ACHN (cell line): ENCODE measurements at regions of chr4 and their contacts with region 1.

Region 1: GRCh38 chr4:88823058-88823919 is 125.7 kb upstream of the NAP1L5 start:
- DNase-seq: peak; percentile 82

Region 2: GRCh38 chr4:88446124-88446523 is 377.2 kb before region 1 on chr4:
- in situ Hi-C with region 1: no loop called
- DNase-seq: no peak

Region 3: DNA sequence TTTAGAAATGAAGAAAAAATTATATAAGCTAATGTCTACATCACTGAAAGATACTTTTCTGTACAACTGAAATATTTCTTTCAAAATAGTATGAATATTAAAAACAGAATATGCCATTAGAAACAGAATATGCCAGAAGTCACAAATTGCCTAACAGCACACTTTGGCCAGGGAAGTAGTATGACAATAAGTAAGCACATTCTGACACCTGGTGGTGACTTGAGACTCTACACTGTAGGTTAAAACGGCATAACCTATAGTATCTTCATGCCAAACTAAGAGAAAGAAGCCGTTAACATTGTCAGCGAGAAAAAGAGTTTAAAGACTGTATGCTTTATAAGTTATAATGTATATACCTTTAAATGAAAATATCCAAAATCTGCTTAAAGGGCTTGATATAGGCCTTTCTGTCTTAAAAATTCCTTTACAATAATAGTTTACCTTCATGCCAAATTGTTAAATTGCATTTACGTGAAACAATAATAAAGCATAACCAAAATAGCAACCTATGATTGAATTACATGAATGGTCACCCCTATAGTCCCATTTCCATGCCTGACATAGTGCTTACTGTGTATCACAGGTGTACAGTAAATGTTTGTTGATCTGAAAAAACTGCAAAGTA is 200.9 kb after region 1 on chr4:
- in situ Hi-C with region 1: loop called (anchors 25 kb)
- DNase-seq: peak; percentile 74